ENCODE measurements at regions of chr7 and their contacts with region 1.

Region 1: GRCh38 chr7:150322833-150323681 is at the starts of genes ACTR3C and LRRC61:
- DNase-seq: peak in 4 of 5 donors; percentile 40 to 54 (median 46)
- H3K4me3 ChIP-seq: peak within 1 kb of the TSS; percentile 82 to 96
- H3K4me3 Mint-ChIP-seq: peak within 1 kb of the TSS; percentile 90 to 99 (median 98)
- H3K27ac ChIP-seq: peak within 1 kb of the TSS; percentile 82
- H3K27ac Mint-ChIP-seq: peak within 1 kb of the TSS; percentile 84 to 99 (median 98)
- H3K4me1 ChIP-seq: peaks cover 44% of the 10 kb centered on the region
- H3K4me1 Mint-ChIP-seq: peaks cover 31 to 49% (median 40%) of the 10 kb centered on the region in 4 donors
- H3K27me3 ChIP-seq: no peaks in the 10 kb centered on the region
- H3K27me3 Mint-ChIP-seq: no peaks in the 10 kb centered on the region
- total RNA-seq, gene ACTR3C: 13.0 to 17.8 TPM
- total RNA-seq, gene LRRC61: 11.0 to 12.8 TPM

Region 2: DNA sequence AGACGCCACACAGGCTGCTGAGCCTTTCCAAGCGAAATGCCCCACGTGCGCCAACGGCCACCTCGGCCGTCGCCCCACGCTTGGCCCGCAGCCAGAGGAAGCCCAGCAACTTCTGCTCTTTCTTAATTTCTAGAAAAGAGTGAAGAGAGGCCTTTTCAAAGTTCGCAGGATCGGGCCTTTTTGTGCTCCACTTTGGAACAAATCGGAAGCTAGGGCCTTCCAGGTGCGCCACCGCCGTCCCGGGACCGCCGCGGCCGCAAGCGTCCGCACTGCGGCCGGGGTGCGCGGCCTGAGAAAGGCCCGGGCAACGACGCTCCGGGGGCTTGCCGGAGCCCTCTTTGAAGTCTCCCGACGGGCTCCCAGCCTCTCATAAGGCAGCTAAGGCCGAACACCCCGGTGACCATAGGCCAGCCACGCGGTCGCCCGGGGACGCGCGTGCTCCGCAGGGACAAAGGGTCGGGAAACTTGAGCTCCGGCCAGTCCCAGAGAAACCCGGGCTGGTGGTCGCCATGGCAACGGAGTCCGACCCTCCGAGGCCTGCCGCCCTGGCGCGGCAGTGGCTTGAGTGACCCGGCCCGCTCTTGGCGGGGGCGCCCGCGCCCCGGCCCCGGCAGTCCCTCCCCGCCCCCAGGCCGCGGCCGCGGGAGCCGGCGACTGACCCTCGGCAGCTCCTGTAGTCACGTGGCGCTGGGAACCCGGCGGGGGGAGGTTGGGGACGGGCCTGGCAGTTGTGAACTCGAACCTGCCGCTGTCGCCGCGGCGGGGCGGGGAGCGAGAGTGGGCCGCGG is 45.2 kb after region 1 on chr7 and contains the start of gene REPIN1:
- CTCF ChIA-PET with region 1: no interaction called
- POLR2A ChIA-PET with region 1: interaction called, 7 read pairs
- intact Hi-C with region 1: loop called (anchors 2 kb)
- DNase-seq: peak; percentile 75 to 91 (median 76)
- H3K4me3 ChIP-seq: peak within 1 kb of the TSS; percentile 64 to 89
- H3K4me3 Mint-ChIP-seq: peak within 1 kb of the TSS; percentile 91 to 98 (median 95)
- H3K27ac ChIP-seq: peak within 1 kb of the TSS; percentile 75
- H3K27ac Mint-ChIP-seq: peak within 1 kb of the TSS; percentile 83 to 96 (median 93)
- H3K4me1 ChIP-seq: peaks cover 26% of the 10 kb centered on the region
- H3K4me1 Mint-ChIP-seq: peaks cover 13 to 42% (median 25%) of the 10 kb centered on the region in 4 donors
- H3K27me3 ChIP-seq: no peaks in the 10 kb centered on the region
- H3K27me3 Mint-ChIP-seq: no peaks in the 10 kb centered on the region
- total RNA-seq, gene REPIN1: 72.0 to 78.5 TPM

Measured in CD4-positive, alpha-beta memory T cell (primary cell).